Endothelial cell of umbilical vein (primary cell): ENCODE measurements at regions of chr12 and their contacts with region 1.

Region 1: DNA sequence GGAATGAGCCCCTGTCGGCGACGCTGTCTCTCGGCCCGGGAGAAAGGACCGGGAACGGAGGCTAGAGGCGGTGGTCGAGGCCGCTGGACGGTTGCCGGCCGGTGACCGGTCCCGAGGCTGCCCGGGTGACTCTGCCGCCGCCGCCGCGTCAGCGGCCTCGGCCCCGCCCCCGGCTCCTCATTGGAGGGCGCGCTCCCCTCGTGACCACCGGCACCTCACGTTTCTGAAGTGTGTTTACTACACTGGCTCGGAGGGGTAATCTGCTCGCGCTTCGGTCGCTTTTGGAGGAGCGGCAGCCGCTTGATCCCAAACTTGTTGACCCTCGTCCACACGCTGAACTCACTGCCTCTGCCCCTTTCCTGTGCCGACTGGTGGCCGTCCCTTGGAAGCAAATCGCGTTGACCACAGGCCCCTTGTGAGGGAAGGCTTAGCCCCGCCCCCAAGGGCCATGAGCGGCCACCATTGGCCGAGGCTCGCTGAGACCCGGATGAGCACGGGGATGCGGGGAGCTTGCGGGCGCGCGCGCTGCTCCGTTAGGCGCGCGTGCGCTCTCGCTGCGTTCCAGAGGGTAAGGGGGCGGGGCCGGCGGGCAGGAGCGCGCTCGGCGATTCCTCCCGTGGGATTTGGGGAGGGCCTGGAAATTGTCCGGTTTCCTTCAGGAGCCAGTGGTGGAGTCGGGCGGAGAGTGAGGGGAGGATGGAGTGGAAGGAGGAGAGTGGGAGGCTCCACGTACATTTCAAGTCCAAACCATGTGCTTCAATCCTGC is at the start of gene CRY1:
- DNase-seq: peak; percentile 98
- H3K4me3 ChIP-seq: peak within 1 kb of the TSS; percentile 56 to 78 (median 71)
- H3K27ac ChIP-seq: peak within 1 kb of the TSS; percentile 94
- H3K4me1 ChIP-seq: peaks cover 20% of the 10 kb centered on the region
- H3K27me3 ChIP-seq: no peaks in the 10 kb centered on the region
- CTCF ChIP-seq: no peak
- POLR2A ChIP-seq: peak; percentile 69
- total RNA-seq, gene CRY1: 21.0 and 24.1 TPM in 2 replicates

Region 2: DNA sequence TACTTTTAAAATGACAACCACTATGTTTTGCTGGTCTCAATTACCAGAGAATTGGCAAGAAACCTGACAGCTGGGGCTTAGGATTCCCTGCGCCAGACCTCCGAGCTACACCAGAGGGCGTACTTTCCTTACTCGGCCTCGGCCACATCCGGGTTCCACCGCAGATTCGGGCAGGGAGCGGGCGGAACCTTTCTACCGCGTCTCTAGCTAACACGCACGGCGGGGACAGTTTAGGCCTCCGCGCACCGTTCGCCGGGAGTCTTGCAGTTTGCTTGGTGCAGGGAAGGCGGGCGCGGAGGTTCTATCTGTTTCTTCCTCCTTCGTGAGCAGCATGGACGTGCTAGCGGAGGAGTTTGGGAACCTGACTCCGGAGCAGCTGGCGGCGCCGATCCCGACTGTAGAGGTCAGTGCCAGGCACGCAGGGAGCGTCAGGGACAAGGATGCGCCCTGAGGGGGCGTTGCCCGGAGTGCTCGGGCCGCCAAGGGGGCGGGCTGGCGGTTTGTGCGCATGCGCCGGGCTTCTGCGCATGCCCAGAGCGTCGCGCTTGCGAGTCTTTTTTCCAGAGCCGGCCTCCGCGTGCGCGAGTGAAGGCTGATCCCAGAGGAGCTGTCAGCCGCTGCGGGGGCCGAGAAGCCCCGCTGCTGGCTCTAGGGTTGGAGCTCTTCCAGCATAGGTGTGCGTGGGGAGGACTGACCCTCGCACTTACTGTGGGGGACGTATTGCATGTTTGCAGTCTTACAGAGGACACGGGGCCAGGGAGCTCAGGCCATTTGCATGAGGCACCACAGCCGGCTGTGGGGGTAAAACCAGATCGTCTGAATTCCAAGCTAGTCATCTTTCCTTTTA is 735.8 kb before region 1 on chr12 and contains the start of gene POLR3B:
- CTCF ChIA-PET with region 1: no interaction called
- POLR2A ChIA-PET with region 1: no interaction called
- dilution Hi-C with region 1: no loop called
- intact Hi-C with region 1: loop called (anchors 5 kb)
- DNase-seq: peak; percentile 97
- H3K4me3 ChIP-seq: peak within 1 kb of the TSS; percentile 52 to 92 (median 87)
- H3K27ac ChIP-seq: peak within 1 kb of the TSS; percentile 64
- H3K4me1 ChIP-seq: peaks cover 12% of the 10 kb centered on the region
- H3K27me3 ChIP-seq: peaks cover 0 to 4% of the 10 kb centered on the region in 2 experiments
- CTCF ChIP-seq: peak; percentile 86 to 89
- POLR2A ChIP-seq: peak; percentile 90
- total RNA-seq, gene POLR3B: 10.1 and 12.3 TPM in 2 replicates

Region 3: DNA sequence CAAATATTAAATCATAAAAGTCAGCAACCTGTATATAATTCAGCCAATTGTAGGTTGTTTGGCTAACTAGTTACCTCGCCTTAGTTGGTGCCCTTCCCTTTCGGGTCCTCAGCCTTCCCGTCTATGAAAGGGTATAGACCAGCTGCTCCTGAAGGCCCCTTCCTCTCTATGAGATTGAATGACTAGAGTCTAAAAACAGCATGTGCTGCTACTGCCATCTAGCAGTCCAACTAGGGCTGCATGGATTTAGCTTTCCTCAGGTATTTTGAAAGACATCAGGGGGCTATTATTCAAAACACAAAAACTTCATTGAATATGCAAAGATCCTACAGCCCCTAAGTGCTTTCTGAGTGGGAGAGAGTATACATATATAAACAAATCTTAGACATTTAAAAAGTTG is 174.9 kb before region 1 on chr12:
- CTCF ChIA-PET with region 1: no interaction called
- POLR2A ChIA-PET with region 1: no interaction called
- dilution Hi-C with region 1: no loop called
- intact Hi-C with region 1: no loop called
- DNase-seq: peak; percentile 60
- H3K4me3 ChIP-seq: no peak overlapping the region
- H3K27ac ChIP-seq: no peak overlapping the region
- H3K4me1 ChIP-seq: peaks cover 13% of the 10 kb centered on the region
- H3K27me3 ChIP-seq: peaks cover 8 to 10% of the 10 kb centered on the region in 2 experiments
- CTCF ChIP-seq: peak; percentile 28 to 55
- POLR2A ChIP-seq: no peak

Region 4: GRCh38 chr12:106955377-106956047 is 138.1 kb before region 1 on chr12 and contains the start of gene TMEM263:
- CTCF ChIA-PET with region 1: interaction called, 16 read pairs
- POLR2A ChIA-PET with region 1: interaction called, 10 read pairs
- dilution Hi-C with region 1: no loop called
- intact Hi-C with region 1: loop called (anchors 1 kb)
- DNase-seq: peak; percentile 99
- H3K4me3 ChIP-seq: peak within 1 kb of the TSS; percentile 86 to 99 (median 97)
- H3K27ac ChIP-seq: peak within 1 kb of the TSS; percentile 87
- H3K4me1 ChIP-seq: peaks cover 12% of the 10 kb centered on the region
- H3K27me3 ChIP-seq: peaks cover 0 to 1% of the 10 kb centered on the region in 2 experiments
- CTCF ChIP-seq: no peak
- POLR2A ChIP-seq: peak; percentile 97
- total RNA-seq, gene TMEM263: 68.8 and 72.5 TPM in 2 replicates

Region 5: GRCh38 chr12:107079172-107080011 is 14.2 kb before region 1 on chr12:
- CTCF ChIA-PET with region 1: interaction called, 10 read pairs
- POLR2A ChIA-PET with region 1: no interaction called
- dilution Hi-C with region 1: no loop called
- intact Hi-C with region 1: loop called (anchors 1 kb)
- DNase-seq: peak; percentile 53
- H3K4me3 ChIP-seq: no peak overlapping the region
- H3K27ac ChIP-seq: no peak overlapping the region
- H3K4me1 ChIP-seq: no peaks in the 10 kb centered on the region
- H3K27me3 ChIP-seq: no peaks in the 10 kb centered on the region
- CTCF ChIP-seq: peak; percentile 38 to 41
- POLR2A ChIP-seq: no peak

Region 6: DNA sequence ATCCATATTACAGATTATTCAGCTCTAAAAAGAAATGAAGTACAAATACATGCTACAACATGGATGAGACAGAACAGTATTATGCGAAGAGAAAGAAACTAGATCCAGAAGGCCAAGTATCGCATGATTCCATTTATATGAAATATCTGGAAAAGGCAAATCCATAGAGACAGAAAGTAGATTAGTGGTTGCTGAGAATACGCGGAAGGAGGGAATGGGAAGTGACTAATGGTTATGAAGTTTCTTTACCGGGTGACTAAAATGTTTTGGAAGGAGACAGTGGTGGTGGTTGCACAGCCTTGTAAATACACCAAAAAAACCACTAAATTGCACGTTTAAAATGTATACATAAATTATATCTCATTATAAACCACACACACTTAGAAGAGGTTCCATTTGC is 654.9 kb after region 1 on chr12:
- CTCF ChIA-PET with region 1: no interaction called
- POLR2A ChIA-PET with region 1: no interaction called
- dilution Hi-C with region 1: no loop called
- intact Hi-C with region 1: loop called (anchors 5 kb)
- DNase-seq: peak; percentile 84
- H3K4me3 ChIP-seq: peak overlapping the region in 1 of 3 experiments; percentile 42
- H3K27ac ChIP-seq: peak overlapping the region; percentile 83
- H3K4me1 ChIP-seq: peaks cover 47% of the 10 kb centered on the region
- H3K27me3 ChIP-seq: no peaks in the 10 kb centered on the region
- CTCF ChIP-seq: no peak
- POLR2A ChIP-seq: no peak

Region 7: DNA sequence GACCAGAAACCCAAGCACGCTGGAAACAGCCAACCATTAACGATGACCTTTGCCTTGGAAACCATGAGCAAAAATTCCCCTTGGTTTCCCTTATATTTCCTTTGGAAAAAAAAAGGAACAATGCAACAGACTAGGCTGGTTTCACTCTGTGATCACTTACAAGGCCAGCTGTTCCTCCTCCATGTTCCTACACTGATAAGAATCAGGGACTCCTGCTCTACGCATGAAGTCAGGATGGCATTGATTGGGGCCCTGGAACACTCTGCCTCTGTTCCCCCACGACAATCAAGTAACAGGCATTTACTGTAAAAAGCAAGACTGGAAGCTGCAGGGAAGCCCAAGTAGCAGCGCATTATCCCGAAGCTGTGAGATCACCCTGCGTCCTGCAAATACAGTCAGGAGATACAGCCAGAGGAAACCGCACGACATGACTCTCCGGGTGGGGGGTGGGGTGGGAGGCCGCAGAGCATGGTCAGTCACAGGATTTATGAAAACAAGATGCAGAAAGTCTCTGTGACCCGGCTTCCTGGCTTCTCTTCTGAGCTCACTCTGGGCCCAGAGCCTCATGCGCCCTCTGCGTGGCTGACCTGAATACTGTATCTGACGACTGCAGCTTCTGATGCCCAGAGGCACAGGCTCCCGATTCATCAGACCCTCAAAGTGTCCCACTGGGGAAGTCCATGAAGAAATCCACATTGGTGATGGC is 1732.7 kb after region 1 on chr12:
- CTCF ChIA-PET with region 1: no interaction called
- POLR2A ChIA-PET with region 1: no interaction called
- dilution Hi-C with region 1: no loop called
- intact Hi-C with region 1: loop called (anchors 5 kb)
- DNase-seq: peak; percentile 98
- H3K4me3 ChIP-seq: peak overlapping the region in 1 of 3 experiments; percentile 49
- H3K27ac ChIP-seq: peak overlapping the region; percentile 100
- H3K4me1 ChIP-seq: peaks cover 71% of the 10 kb centered on the region
- H3K27me3 ChIP-seq: no peaks in the 10 kb centered on the region
- CTCF ChIP-seq: peak in 1 of 2 donors; percentile 23
- POLR2A ChIP-seq: peak; percentile 31